ENCODE measurements at regions of chr14 and their contacts with region 1.

Region 1: DNA sequence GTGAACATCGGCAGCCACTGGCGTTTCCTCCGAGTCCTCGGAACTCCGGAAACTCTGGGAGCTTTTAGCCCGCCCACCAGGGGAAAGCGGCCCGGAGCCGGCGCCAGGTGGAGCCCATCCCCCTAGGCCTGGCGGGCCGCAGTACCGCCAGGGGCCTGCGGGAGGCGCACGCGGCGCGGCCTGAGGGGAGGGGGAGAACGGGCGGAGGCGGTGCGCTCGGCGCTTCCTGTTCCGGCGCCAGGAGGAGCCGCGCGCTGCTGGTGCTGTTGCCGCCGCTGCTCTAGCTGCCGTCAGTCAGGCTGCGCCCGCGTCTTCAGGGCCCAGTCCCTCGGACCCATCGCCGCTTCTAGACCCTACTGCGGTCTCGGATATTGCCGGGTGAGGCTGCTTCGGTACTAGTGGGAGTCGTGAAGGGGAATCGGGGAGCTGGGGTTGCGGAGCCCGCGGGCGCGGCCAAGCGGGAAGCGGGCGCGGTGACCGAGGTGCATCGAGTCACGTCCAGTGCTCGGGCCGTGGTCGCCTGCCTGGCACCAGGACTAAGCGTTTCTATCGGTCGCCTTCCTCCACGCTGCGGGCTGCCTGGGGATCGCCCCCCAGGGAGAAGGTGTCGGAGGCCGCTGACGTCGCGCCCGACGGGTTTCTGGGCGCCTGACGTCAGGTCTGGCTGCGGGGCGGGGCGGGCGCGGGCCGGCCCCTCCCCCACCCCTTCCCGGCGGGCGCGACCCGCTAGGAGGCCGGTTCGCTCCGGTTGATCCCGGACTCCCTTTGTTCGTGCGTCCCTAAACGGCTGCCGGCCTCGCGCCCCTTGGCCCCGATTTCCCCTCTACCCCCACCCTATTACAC is at the start of gene MAPK1IP1L:
- DNase-seq: peak; percentile 81 to 98 (median 88)

Region 2: DNA sequence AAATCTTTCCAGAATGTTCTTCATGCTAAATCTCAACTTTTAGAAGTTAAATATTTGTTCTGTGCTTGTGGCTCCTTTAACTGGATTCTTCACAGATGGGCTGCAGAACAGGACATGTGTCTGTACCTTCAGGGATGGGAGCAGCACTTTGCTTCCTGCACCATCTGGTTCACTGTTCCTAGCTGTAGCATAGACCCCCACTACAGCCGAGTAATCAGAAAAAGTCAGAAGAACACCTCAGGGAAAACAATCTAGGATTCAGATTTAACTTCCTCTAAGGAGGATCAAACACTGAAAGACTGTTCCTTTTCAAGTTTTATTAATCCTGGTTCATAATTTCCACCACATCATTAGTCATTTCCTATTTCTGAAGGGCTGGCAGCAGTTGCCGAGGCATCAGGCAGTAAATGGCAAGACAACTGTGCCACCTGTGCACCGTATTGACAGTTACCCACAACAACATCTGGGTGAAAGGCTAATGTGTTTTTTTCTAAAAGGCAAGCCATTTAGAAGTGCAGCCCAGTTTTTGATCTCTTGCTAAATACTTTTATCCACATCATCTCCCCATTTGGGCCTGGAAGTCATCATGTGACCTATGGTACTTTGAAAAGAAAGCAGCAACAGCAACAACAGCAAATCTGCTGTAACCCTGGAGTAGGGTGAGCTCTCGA is 882.3 kb before region 1 on chr14:
- intact Hi-C with region 1: no loop called
- DNase-seq: no peak

Region 3: GRCh38 chr14:55026793-55027561 is 24.7 kb before region 1 on chr14 and contains the starts of genes SOCS4 and WDHD1:
- intact Hi-C with region 1: loop called (anchors 1 kb)
- DNase-seq: peak; percentile 92 to 99 (median 94)

Region 4: DNA sequence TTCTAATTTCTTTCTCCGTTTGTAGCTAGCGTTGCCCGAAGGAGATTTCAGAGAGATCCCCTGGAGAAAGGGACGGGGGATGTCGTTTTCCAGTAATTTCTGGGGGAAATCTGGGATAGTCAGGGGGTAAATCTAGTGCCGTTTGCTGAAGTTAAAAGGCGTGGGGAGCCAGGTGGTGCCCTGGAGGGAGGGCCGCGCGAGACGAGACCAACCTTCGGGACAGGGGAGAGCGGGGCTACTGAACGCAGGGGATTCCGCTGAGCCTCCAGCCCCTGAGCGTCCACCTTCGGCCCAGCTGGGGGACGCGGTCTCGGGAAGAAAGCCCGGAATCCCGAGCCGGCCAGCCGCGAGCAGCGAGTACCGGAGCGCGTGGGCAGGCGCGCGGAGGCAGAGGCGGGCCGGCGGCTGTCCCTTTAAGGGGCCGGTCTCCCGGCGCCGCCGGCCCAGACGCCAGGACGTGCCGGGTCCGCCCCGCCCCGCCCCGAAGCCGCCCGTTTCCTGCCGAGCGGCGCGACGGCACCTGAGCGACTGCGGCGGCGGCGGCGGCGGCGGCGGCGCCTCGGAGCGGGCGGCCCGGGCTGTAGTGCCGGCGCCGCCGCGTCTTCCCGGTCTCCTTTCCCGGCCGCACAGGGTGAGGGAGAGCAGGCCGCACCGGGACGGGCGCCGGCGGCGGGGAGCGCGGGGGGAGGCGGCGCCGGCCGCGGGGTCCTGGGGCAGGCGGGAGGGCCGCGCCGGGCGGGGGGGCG is 528.2 kb after region 1 on chr14 and contains the start of gene KTN1:
- intact Hi-C with region 1: loop called (anchors 10 kb)
- DNase-seq: peak; percentile 58 to 97 (median 79)

Measured in posterior cingulate gyrus (tissue), 11 donors.